ENCODE measurements at regions of chr12 and their contacts with region 1.

Region 1: GRCh38 chr12:78739653-78740052 is 124.9 kb upstream of the SYT1 start:
- DNase-seq: no peak
- ATAC-seq: no peak

Region 2: GRCh38 chr12:79019672-79020071 is 280.0 kb after region 1 on chr12:
- intact Hi-C with region 1: loop called (anchors 5 kb)
- DNase-seq: no peak
- ATAC-seq: no peak